ENCODE measurements at regions of chr11 and their contacts with region 1.

Region 1: GRCh38 chr11:4181782-4182721 is 87.5 kb downstream of the RRM1 start:
- DNase-seq: no peak
- ATAC-seq: peak; percentile 97
- H3K4me3 ChIP-seq: no peak overlapping the region
- H3K27ac ChIP-seq: no peak overlapping the region
- H3K4me1 ChIP-seq: no peaks in the 10 kb centered on the region
- H3K27me3 ChIP-seq: no peaks in the 10 kb centered on the region; a peak in 1 of 4 replicates
- CTCF ChIP-seq: peak; percentile 67 to 90 (median 75)
- EP300 ChIP-seq: no peak
- POLR2A ChIP-seq: no peak
- RAD21 ChIP-seq: peak; percentile 53

Region 2: DNA sequence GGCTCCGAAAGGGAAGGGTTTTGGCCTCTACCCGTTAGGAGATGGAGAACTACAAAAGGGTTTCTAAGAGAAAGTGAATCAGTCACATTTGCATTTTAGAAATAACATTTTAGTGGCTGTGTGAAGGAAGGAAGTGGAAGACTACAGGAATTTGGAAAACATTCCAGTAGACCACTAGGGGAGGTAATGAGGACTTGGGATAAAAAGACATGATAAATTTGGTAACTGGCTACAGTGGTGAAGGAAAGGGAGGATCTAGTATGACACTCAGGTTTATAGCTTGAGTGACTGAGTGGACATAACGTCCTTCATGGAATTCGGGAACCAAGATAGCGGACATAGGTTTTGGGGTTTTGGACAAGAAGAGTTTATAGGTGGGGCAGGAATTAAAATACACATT is 94.5 kb before region 1 on chr11:
- CTCF ChIA-PET with region 1: no interaction called
- POLR2A ChIA-PET with region 1: no interaction called
- RAD21 ChIA-PET with region 1: no interaction called
- SMC1A ChIA-PET with region 1: no interaction called
- in situ Hi-C with region 1: no loop called
- intact Hi-C with region 1: no loop called
- DNase-seq: no peak
- ATAC-seq: no peak
- H3K4me3 ChIP-seq: no peak overlapping the region
- H3K27ac ChIP-seq: no peak overlapping the region
- H3K4me1 ChIP-seq: peaks cover 8% of the 10 kb centered on the region
- H3K27me3 ChIP-seq: no peaks in the 10 kb centered on the region
- CTCF ChIP-seq: no peak
- EP300 ChIP-seq: no peak
- POLR2A ChIP-seq: no peak
- RAD21 ChIP-seq: no peak

Region 3: DNA sequence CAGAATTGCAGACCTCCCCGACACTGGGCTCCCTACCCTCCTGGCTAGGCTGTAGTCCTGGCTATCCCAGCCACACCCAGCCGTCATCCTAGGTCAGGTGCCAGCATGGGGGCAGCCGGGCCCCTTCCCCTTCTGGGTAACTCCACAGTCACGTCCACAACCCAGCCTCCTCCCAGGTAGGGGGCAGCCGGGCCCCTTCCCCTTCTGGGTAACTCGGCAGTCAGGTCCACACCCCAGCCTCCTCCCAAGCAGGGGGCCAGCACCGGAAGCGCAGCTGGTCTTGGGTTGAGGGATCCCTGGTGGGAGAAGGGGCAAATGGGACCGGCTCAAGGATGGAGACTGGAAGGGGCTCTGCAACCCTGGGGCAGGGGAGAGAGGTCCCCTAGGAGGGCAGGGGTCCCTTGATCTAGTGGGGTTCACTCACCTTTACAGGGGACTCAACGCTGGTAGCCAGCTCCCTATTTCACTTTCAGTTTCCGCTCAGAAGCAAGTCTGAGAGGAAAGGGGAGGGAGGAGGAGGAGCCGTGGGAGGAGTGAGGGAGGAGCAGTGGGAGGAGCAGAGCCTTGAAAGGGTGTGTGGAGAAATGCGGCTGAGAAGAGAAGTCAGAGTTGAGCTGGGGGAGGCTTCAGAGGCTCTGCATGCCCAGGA is 211.3 kb after region 1 on chr11 and contains the start of gene TRIM21:
- CTCF ChIA-PET with region 1: interaction called, 10 read pairs
- POLR2A ChIA-PET with region 1: no interaction called
- RAD21 ChIA-PET with region 1: interaction called, 6 read pairs
- SMC1A ChIA-PET with region 1: no interaction called
- in situ Hi-C with region 1: no loop called
- intact Hi-C with region 1: loop called (anchors 5 kb)
- DNase-seq: peak; percentile 72
- ATAC-seq: peak; percentile 99
- H3K4me3 ChIP-seq: peak within 1 kb of the TSS; percentile 87
- H3K27ac ChIP-seq: peak within 1 kb of the TSS; percentile 95
- H3K4me1 ChIP-seq: no peaks in the 10 kb centered on the region
- H3K27me3 ChIP-seq: no peaks in the 10 kb centered on the region
- CTCF ChIP-seq: no peak
- EP300 ChIP-seq: no peak
- POLR2A ChIP-seq: peak; percentile 82
- RAD21 ChIP-seq: no peak
- polyA plus RNA-seq, gene TRIM21: 24.7 to 28.6 TPM

Region 4: DNA sequence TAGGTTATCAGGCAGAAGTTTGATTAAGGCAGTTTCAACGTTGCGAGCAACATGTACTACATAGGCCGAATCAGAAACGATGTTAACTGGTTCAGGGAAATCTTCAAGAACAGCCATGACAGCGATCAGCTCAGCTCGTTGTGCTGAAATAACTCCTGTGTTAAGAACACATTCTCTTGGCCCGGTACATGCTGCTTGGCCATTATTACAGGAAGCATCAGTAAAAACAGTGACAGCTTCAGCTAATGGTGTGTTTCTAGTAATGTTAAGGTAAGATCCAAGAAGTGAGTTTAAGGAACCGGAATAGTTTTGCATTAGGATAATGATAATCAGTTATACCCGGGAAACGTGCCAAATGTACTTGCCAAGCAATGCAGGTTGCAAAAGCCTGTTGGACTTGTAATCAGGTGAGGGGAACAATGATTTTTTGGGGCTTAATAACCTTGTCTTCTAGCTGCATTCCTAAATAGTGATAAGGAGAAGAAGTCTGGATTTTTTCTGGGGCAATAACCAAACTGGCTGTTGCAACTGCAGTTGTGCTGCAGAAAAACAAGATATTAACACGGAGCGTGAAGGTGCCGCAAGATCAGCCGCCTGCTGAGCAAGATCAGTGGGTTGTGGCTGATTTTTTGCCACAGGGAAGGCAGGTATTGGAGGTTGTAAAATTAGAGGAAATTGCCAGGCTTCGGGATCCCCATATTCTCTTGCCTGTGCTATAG is 314.7 kb after region 1 on chr11:
- CTCF ChIA-PET with region 1: interaction called, 91 read pairs
- POLR2A ChIA-PET with region 1: no interaction called
- RAD21 ChIA-PET with region 1: interaction called, 46 read pairs
- SMC1A ChIA-PET with region 1: interaction called, 30 read pairs
- in situ Hi-C with region 1: loop called (anchors 5 kb)
- intact Hi-C with region 1: loop called (anchors 1 kb)
- DNase-seq: no peak
- ATAC-seq: no peak
- H3K4me3 ChIP-seq: no peak overlapping the region
- H3K27ac ChIP-seq: no peak overlapping the region
- H3K4me1 ChIP-seq: no peaks in the 10 kb centered on the region; the same call in 1 of the 2 replicates
- H3K27me3 ChIP-seq: no peaks in the 10 kb centered on the region
- CTCF ChIP-seq: no peak
- EP300 ChIP-seq: no peak
- POLR2A ChIP-seq: no peak
- RAD21 ChIP-seq: no peak

Region 5: DNA sequence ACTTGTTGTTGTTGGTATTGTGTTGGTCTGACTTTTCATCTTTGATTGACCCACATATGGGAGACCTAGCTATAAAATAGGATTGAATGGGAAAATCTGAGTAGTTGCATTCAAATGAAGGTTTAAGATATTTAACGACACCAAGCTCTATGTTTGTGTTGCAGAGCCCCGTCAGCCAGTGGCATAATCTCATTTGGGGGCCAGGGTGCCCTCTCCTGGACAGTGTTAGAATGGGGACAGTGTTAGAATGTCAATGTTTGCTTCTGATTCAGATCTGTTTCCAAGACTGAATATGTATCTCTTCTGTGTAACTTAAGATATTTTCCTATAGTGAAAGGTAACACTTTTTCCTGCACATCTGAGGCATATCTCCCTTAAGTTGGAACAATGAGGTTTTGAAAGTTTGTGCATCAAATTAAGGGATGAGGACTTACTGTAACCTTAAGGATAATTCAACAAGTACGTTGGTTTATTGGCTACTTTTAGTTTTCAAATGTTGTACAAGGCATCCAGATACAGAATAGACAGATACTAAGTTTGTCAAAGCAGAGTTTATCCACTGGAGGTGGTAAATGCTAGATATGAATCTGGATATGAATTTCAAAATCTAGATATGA is 357.7 kb after region 1 on chr11:
- CTCF ChIA-PET with region 1: interaction called, 122 read pairs
- POLR2A ChIA-PET with region 1: no interaction called
- RAD21 ChIA-PET with region 1: interaction called, 18 read pairs
- SMC1A ChIA-PET with region 1: interaction called, 28 read pairs
- in situ Hi-C with region 1: loop called (anchors 5 kb)
- intact Hi-C with region 1: loop called (anchors 1 kb)
- DNase-seq: no peak
- ATAC-seq: peak; percentile 90
- H3K4me3 ChIP-seq: no peak overlapping the region
- H3K27ac ChIP-seq: no peak overlapping the region
- H3K4me1 ChIP-seq: no peaks in the 10 kb centered on the region
- H3K27me3 ChIP-seq: no peaks in the 10 kb centered on the region; a peak in 1 of 4 replicates
- CTCF ChIP-seq: peak; percentile 57 to 68 (median 64)
- EP300 ChIP-seq: no peak
- POLR2A ChIP-seq: no peak
- RAD21 ChIP-seq: peak; percentile 57

Region 6: GRCh38 chr11:5004424-5005274 is 822.6 kb after region 1 on chr11:
- CTCF ChIA-PET with region 1: no interaction called
- POLR2A ChIA-PET with region 1: no interaction called
- RAD21 ChIA-PET with region 1: no interaction called
- SMC1A ChIA-PET with region 1: no interaction called
- in situ Hi-C with region 1: loop called (anchors 10 kb)
- intact Hi-C with region 1: loop called (anchors 5 kb)
- DNase-seq: no peak
- ATAC-seq: peak; percentile 70
- H3K4me3 ChIP-seq: no peak overlapping the region
- H3K27ac ChIP-seq: no peak overlapping the region
- H3K4me1 ChIP-seq: no peaks in the 10 kb centered on the region
- H3K27me3 ChIP-seq: no peaks in the 10 kb centered on the region; a peak in 1 of 4 replicates
- CTCF ChIP-seq: peak; percentile 57 to 59 (median 59); a peak in 4 of 6 replicates
- EP300 ChIP-seq: no peak
- POLR2A ChIP-seq: no peak
- RAD21 ChIP-seq: peak; percentile 64

Measured in GM12878 (cell line).